MCF 10A (cell line): ENCODE measurements at regions of chr15 and their contacts with region 1.

Region 1: GRCh38 chr15:34241372-34242330 is 16.8 kb downstream of the EMC4 start:
- DNase-seq: peak; percentile 64
- H3K4me3 Mint-ChIP-seq: no peak overlapping the region
- H3K27ac Mint-ChIP-seq: no peak overlapping the region
- H3K4me1 Mint-ChIP-seq: peaks cover 13% of the 10 kb centered on the region
- H3K27me3 Mint-ChIP-seq: no peaks in the 10 kb centered on the region
- CTCF ChIP-seq: peak; percentile 68

Region 2: DNA sequence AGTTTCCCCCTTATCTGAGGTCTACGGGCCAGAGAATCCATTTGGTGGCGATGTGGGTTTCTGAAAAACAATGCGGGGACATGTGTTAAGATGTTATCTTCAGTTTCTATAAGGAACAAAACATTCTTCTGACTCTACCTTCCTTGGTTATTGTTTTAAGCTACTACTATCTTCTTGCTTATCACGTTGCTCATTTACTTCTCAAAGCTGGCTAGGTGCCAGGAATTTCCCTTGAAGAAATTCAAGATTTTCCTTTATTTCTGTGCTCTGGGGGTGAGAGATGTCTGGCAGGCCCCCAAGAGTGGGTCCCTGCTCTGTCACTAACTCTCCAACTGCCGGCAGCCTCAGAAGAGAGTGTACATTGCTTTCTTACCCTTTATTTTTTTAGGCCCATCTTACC is 811.1 kb before region 1 on chr15:
- CTCF ChIA-PET with region 1: no interaction called
- POLR2A ChIA-PET with region 1: no interaction called
- intact Hi-C with region 1: no loop called
- DNase-seq: no peak
- H3K4me3 Mint-ChIP-seq: no peak overlapping the region
- H3K27ac Mint-ChIP-seq: no peak overlapping the region
- H3K4me1 Mint-ChIP-seq: no peaks in the 10 kb centered on the region
- H3K27me3 Mint-ChIP-seq: no peaks in the 10 kb centered on the region
- CTCF ChIP-seq: no peak

Region 3: GRCh38 chr15:33975022-33975565 is 266.6 kb before region 1 on chr15:
- CTCF ChIA-PET with region 1: no interaction called
- POLR2A ChIA-PET with region 1: no interaction called
- intact Hi-C with region 1: no loop called
- DNase-seq: no peak
- H3K4me3 Mint-ChIP-seq: no peak overlapping the region
- H3K27ac Mint-ChIP-seq: no peak overlapping the region
- H3K4me1 Mint-ChIP-seq: peaks cover 5% of the 10 kb centered on the region
- H3K27me3 Mint-ChIP-seq: no peaks in the 10 kb centered on the region
- CTCF ChIP-seq: no peak

Region 4: GRCh38 chr15:34252545-34252944 is 10.9 kb after region 1 on chr15:
- CTCF ChIA-PET with region 1: interaction called, 21 read pairs
- POLR2A ChIA-PET with region 1: no interaction called
- intact Hi-C with region 1: no loop called
- DNase-seq: no peak
- H3K4me3 Mint-ChIP-seq: no peak overlapping the region
- H3K27ac Mint-ChIP-seq: no peak overlapping the region
- H3K4me1 Mint-ChIP-seq: no peaks in the 10 kb centered on the region
- H3K27me3 Mint-ChIP-seq: no peaks in the 10 kb centered on the region
- CTCF ChIP-seq: no peak

Region 5: GRCh38 chr15:34337557-34338306 is 96.1 kb after region 1 on chr15 and contains the start of gene SLC12A6:
- CTCF ChIA-PET with region 1: interaction called, 7 read pairs
- POLR2A ChIA-PET with region 1: interaction called, 16 read pairs
- intact Hi-C with region 1: loop called (anchors 1 kb)
- DNase-seq: peak; percentile 88
- H3K4me3 Mint-ChIP-seq: peak within 1 kb of the TSS; percentile 83
- H3K27ac Mint-ChIP-seq: peak within 1 kb of the TSS; percentile 49
- H3K4me1 Mint-ChIP-seq: peaks cover 32% of the 10 kb centered on the region
- H3K27me3 Mint-ChIP-seq: no peaks in the 10 kb centered on the region
- CTCF ChIP-seq: no peak
- total RNA-seq, gene SLC12A6: 11.7 and 15.3 TPM in 2 replicates

Region 6: DNA sequence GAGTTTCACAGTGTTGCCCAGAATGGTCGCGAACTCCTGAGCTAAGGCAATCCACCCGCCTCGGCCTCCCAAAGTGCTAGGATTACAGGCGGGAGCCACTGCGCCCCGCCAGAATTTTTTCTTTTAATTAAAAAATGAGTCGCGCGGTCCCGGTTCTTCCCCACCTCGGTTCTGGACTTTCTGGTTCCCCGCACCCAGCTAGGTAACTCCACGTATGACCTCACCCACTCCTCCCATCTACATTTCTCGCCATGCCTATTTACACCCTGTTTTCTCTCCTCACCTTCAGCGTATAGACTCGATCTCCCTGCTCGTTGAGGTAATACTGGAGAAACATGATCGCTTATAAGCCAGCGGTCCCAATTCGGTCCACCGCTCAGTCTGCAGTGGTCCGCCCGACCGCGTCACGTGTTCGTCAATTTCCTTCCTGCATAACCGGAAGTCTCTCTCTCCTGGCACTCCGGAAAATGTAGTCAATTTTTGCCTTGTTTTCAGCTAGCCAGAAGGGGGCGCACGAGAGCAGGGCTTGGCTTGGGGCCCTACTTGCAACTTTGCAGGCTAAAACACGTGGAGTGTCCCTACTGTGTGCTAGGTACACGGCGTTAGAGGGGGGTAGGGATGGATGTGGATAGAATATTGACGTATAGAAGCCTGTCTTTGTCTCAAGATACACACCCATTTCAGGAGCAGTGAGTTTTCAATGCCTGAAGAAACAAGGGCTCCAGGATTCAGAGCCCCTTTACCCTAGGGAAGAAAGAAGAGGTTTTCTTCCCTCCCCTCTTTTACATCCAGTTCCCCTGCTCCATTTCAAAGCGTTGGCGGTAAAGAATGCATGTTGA is 101.3 kb after region 1 on chr15 and contains the starts of genes NOP10 and NUTM1:
- CTCF ChIA-PET with region 1: interaction called, 7 read pairs
- POLR2A ChIA-PET with region 1: interaction called, 16 read pairs
- intact Hi-C with region 1: loop called (anchors 1 kb)
- DNase-seq: peak; percentile 91
- H3K4me3 Mint-ChIP-seq: no peak within 1 kb of the TSS
- H3K27ac Mint-ChIP-seq: no peak within 1 kb of the TSS
- H3K4me1 Mint-ChIP-seq: peaks cover 5% of the 10 kb centered on the region
- H3K27me3 Mint-ChIP-seq: peaks cover 2% of the 10 kb centered on the region
- CTCF ChIP-seq: peak; percentile 91
- total RNA-seq, gene NOP10: 168 and 187 TPM in 2 replicates
- total RNA-seq, gene NUTM1: not detected in 2 replicates